AG04450 (cell line): ENCODE measurements at regions of chr17 and their contacts with region 1.

Region 1: DNA sequence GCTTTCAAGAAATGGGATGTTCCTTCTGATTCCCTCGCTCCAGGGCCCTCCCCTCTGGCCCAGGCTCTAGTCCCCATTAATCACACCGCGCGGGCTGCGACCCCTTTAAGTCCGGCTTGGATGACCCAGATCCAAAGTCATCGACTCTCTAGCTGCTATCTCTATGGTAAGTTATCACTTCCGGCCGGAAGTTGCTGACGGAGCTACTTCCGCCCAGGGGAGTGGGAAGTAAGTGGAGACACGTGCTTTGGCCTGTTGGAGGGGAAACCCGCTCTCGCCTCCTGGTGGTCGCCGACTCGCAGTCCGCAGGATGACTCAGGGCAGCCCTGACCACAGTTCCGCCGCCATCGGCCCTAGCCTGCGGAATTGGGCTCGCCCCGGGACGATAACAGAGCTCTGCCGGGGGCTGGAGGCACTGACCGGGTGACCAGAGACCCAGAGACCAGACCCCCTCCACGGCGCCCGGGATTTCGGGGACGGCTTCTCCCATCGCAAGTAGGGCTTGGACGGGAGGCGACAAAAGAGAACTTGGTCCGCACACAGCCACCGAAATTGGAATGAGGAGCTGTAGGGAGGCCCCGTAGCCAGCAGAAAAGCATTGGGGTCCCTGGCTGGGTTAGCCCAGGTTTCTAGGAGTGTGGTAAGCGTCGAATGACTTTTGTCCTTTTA is 52.2 kb upstream of the SEC14L1 start:
- DNase-seq: peak; percentile 96
- H3K4me3 ChIP-seq: peak overlapping the region; percentile 89
- H3K27ac ChIP-seq: peak overlapping the region; percentile 89
- H3K27me3 ChIP-seq: no peaks in the 10 kb centered on the region
- CTCF ChIP-seq: peak; percentile 70

Region 2: DNA sequence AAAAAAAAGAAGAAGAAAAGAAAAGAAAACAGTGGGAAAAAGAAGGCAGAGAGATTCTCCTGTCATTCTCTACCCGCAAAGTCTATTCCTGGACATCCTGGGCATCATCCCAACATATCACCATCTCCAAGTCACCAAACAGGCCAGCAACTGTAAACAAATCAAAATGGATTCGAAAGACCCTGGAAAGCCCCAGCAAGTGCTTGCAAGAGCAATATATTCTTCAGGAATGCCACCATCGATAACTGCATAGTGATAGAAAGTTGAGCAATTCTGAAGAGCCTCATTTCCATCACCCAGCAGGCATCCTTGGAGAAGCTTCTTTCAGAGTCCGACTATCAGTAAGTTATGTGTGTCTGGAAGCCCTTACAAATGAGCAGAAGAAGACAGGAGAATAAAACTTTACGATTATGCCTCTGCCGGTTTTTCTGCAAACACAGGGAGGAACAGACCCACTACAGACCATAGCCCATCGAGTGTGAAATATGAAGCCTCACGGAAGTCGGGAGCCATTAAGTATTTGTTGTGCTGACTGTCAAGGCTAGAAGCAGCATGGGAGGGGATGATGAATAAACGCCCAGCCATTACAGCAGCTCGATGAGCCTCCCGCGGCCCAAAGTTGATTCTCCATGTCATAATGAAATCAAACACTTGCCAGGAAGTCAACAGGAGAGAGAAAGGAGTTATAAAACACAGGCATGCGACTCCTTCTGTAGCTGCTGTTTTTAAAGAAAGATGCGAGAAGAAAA is 12.3 kb before region 1 on chr17:
- CTCF ChIA-PET with region 1: interaction called, 29 read pairs
- POLR2A ChIA-PET with region 1: no interaction called
- DNase-seq: no peak
- H3K4me3 ChIP-seq: peak overlapping the region; percentile 27
- H3K27ac ChIP-seq: no peak overlapping the region
- H3K27me3 ChIP-seq: peaks cover 29% of the 10 kb centered on the region
- CTCF ChIP-seq: no peak

Region 3: GRCh38 chr17:77140166-77140878 is 51.7 kb after region 1 on chr17:
- CTCF ChIA-PET with region 1: interaction called, 10 read pairs
- POLR2A ChIA-PET with region 1: interaction called, 7 read pairs
- DNase-seq: peak; percentile 96
- H3K4me3 ChIP-seq: peak overlapping the region; percentile 59
- H3K27ac ChIP-seq: peak overlapping the region; percentile 88
- H3K27me3 ChIP-seq: no peaks in the 10 kb centered on the region
- CTCF ChIP-seq: no peak

Region 4: GRCh38 chr17:77182205-77183172 is 93.9 kb after region 1 on chr17:
- CTCF ChIA-PET with region 1: interaction called, 17 read pairs
- POLR2A ChIA-PET with region 1: no interaction called
- DNase-seq: no peak
- H3K4me3 ChIP-seq: no peak overlapping the region
- H3K27ac ChIP-seq: no peak overlapping the region
- H3K27me3 ChIP-seq: no peaks in the 10 kb centered on the region
- CTCF ChIP-seq: no peak

Region 5: DNA sequence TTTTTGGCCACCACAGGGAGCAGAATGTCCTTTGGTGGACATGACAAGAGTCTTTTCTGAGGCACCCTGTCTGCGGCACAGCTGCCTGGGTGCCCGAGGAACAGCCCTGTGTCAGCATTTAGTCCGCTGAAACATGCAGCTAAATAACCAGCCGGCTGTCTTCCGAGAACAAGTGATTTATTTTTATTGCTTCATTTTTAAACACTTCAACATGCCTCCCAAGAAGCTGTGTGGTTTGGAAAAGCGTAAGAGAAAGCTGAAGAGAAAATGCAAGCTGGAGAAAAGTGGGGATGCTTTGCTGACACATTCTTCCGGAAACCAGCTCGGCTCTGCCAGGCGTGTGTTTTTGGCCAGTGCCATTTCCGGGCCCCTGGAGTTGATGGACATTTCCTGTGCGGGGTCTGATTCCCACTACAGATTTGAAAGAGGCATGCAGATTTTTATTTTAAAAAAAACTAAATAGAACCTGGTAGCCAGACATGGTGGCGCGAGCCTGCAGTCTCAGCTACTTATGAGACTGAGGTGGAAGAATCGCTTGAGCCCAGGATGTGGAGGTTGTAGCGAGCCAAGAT is 146.9 kb after region 1 on chr17:
- CTCF ChIA-PET with region 1: interaction called, 30 read pairs
- POLR2A ChIA-PET with region 1: interaction called, 9 read pairs
- DNase-seq: peak; percentile 80
- H3K4me3 ChIP-seq: peak overlapping the region; percentile 46
- H3K27ac ChIP-seq: peak overlapping the region; percentile 90
- H3K27me3 ChIP-seq: no peaks in the 10 kb centered on the region
- CTCF ChIP-seq: no peak

Region 6: GRCh38 chr17:77254951-77255825 is 166.6 kb after region 1 on chr17:
- CTCF ChIA-PET with region 1: interaction called, 31 read pairs
- POLR2A ChIA-PET with region 1: interaction called, 8 read pairs
- DNase-seq: peak; percentile 50
- H3K4me3 ChIP-seq: no peak overlapping the region; the same call in 1 of the 2 replicates
- H3K27ac ChIP-seq: peak overlapping the region; percentile 47
- H3K27me3 ChIP-seq: no peaks in the 10 kb centered on the region
- CTCF ChIP-seq: no peak